ENCODE measurements at regions of chr12 and their contacts with region 1.

Region 1: GRCh38 chr12:57462251-57462911 is 2.8 kb downstream of the GLI1 start:
- DNase-seq: peak; percentile 78 to 93 (median 88)
- ATAC-seq: peak; percentile 63 to 66
- H3K4me3 Mint-ChIP-seq: peak overlapping the region; percentile 80 to 96 (median 90)
- H3K27ac Mint-ChIP-seq: peak overlapping the region; percentile 52 to 93 (median 87)
- H3K4me1 Mint-ChIP-seq: peaks cover 31 to 58% (median 43%) of the 10 kb centered on the region in 4 donors
- H3K27me3 Mint-ChIP-seq: peaks cover 0 to 3% (median 0%) of the 10 kb centered on the region in 5 donors

Region 2: DNA sequence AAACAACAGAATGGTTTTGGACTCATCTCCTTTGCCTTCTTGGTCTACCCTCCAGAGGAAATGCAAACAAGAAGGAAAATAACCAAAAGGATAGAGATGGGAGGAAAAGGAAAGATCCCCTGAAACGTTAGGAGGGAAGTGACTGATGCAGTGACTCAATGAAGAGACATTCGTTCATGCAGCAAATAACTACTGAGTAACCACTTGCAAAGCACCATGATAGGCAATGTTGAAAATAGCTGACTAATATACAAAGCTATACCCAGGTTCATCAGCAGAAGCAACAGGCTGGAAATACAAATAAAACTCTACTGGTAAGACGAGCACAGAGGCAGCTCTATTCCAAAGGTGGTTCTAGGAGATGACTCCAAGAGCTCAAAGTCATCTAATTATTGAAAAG is 73.3 kb before region 1 on chr12:
- POLR2A ChIA-PET with region 1: no interaction called
- DNase-seq: no peak
- ATAC-seq: no peak
- H3K4me3 Mint-ChIP-seq: no peak overlapping the region
- H3K27ac Mint-ChIP-seq: peak overlapping the region in 2 of 10 donors; percentile 0 to 82
- H3K4me1 Mint-ChIP-seq: peaks cover 2 to 14% (median 8%) of the 10 kb centered on the region in 4 donors
- H3K27me3 Mint-ChIP-seq: no peaks in the 10 kb centered on the region

Region 3: DNA sequence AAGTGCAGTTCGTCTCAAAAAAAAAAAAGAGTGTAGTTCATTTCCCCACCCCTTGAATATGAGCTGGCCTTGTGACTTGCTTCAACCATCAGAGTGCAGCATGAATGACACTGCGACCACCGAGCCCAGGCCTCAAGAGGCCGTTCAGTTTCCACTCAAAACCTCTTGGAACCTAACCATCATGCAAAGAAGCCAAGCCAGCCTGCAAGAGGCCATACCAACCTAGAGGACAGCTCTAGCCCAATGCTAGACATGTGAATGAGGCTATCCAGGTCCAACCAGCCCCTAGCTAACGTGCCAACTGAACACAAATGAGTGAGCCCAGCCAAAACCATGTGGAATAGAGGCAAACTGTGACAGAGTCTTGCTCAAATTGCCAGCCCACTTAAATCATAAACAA is 61.2 kb before region 1 on chr12:
- POLR2A ChIA-PET with region 1: no interaction called
- DNase-seq: no peak
- ATAC-seq: no peak
- H3K4me3 Mint-ChIP-seq: no peak overlapping the region
- H3K27ac Mint-ChIP-seq: peak overlapping the region in 3 of 10 donors; percentile 26 to 65 (median 54)
- H3K4me1 Mint-ChIP-seq: peaks cover 11 to 25% (median 14%) of the 10 kb centered on the region in 4 donors
- H3K27me3 Mint-ChIP-seq: no peaks in the 10 kb centered on the region

Region 4: GRCh38 chr12:57430931-57431720 is 31.3 kb before region 1 on chr12 and contains the start of gene R3HDM2:
- POLR2A ChIA-PET with region 1: interaction called, 10 read pairs
- DNase-seq: peak; percentile 90 to 97 (median 94)
- ATAC-seq: peak; percentile 93 to 94
- H3K4me3 Mint-ChIP-seq: peak within 1 kb of the TSS; percentile 95 to 100 (median 98)
- H3K27ac Mint-ChIP-seq: peak within 1 kb of the TSS; percentile 99 to 100 (median 100)
- H3K4me1 Mint-ChIP-seq: peaks cover 21 to 50% (median 48%) of the 10 kb centered on the region in 4 donors
- H3K27me3 Mint-ChIP-seq: no peaks in the 10 kb centered on the region
- polyA plus RNA-seq, gene R3HDM2: 5.4 to 17.3 (median 7.4) TPM

Region 5: GRCh38 chr12:57583008-57583831 is 120.8 kb after region 1 on chr12:
- POLR2A ChIA-PET with region 1: interaction called, 11 read pairs
- DNase-seq: peak; percentile 22 to 88 (median 72)
- ATAC-seq: peak; percentile 100
- H3K4me3 Mint-ChIP-seq: no peak overlapping the region
- H3K27ac Mint-ChIP-seq: peak overlapping the region in 1 of 10 donors; percentile 80
- H3K4me1 Mint-ChIP-seq: peaks cover 3 to 8% (median 5%) of the 10 kb centered on the region in 4 donors
- H3K27me3 Mint-ChIP-seq: peaks cover 0 to 16% (median 0%) of the 10 kb centered on the region in 5 donors

Measured in naive thymus-derived CD8-positive, alpha-beta T cell (primary cell).